K562 (cell line): ENCODE measurements at regions of chr2 and their contacts with region 1.

Region 1: DNA sequence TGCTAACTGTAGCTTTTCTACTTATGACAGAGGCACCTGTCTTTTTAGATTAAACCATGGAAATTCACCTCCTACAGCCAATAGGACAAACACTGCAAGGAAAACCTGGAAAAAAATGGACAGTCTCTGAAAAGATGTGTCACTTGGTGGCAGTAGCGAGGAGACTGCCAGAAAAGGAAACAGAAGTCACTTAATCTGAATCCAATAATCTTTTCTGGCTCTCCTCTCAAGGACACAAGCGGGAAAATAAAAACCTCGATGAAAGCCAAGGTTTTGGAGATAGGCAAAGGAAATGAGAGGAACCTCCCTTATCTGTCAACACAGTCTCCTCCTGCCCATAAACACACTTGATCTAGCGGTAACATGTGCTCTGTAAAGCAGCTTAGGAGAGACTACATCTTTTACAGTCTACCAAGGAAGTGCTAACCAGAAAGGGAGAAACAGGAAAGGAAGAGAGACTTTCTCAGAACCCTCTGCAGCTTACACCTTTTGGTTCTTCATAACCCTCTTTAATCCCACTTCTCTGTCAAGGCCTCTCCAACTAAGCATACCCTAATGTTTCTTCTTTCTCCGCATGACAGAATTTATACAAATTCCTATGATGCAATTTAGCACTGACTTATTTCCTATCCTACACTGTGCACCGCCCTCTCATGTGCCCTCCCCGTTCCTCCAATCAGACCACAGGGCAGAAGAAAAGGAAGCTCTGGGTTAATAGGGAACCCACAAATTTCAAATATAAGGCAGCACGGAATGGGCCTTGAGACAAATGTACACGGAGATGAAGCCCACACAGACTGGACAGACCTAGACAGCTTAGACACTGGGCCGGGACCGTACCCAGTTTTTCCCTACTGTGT is 52.8 kb downstream of the CLASP1 start:
- DNase-seq: peak; percentile 76 to 93 (median 80)
- ATAC-seq: peak; percentile 93
- H3K4me3 ChIP-seq: peak overlapping the region; percentile 35
- H3K27ac ChIP-seq: peak overlapping the region; percentile 93
- H3K4me1 ChIP-seq: peaks cover 0 to 35% of the 10 kb centered on the region in 2 experiments; a peak in 4 of 5 replicates
- H3K27me3 ChIP-seq: no peaks in the 10 kb centered on the region
- CTCF ChIP-seq: peak; percentile 46 to 82 (median 74); a peak in 4 of 6 replicates
- EP300 ChIP-seq: peak; percentile 96
- POLR2A ChIP-seq: peak; percentile 63; the same call in 1 of the 2 replicates
- RAD21 ChIP-seq: peak; percentile 62 to 74

Region 2: DNA sequence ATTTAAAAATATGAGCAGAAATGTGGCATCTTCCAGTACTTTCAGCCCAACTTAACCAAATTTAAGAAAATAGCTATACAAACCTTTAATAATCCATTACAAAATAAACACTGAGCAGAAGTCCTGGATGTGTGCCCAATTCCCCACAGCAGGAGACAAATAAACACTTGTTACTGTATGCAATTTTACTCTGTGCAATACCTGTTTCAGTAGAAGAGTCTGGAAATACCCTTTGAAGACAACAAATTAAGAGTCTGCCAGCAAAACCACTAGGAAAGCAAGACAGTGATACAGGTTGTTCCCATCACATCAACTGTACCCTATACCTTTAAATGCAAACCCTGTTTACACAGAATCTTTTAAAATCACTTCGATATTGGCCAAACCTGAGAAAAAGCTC is 107.2 kb before region 1 on chr2:
- CTCF ChIA-PET with region 1: no interaction called
- POLR2A ChIA-PET with region 1: no interaction called
- in situ Hi-C with region 1: no loop called
- intact Hi-C with region 1: no loop called
- DNase-seq: no peak
- ATAC-seq: peak; percentile 44; the same call in 1 of the 3 replicates
- H3K4me3 ChIP-seq: no peak overlapping the region
- H3K27ac ChIP-seq: no peak overlapping the region
- H3K4me1 ChIP-seq: peaks cover 0 to 7% of the 10 kb centered on the region in 2 experiments; a peak in 1 of 5 replicates
- H3K27me3 ChIP-seq: no peaks in the 10 kb centered on the region
- CTCF ChIP-seq: no peak
- EP300 ChIP-seq: no peak
- POLR2A ChIP-seq: no peak
- RAD21 ChIP-seq: no peak

Region 3: DNA sequence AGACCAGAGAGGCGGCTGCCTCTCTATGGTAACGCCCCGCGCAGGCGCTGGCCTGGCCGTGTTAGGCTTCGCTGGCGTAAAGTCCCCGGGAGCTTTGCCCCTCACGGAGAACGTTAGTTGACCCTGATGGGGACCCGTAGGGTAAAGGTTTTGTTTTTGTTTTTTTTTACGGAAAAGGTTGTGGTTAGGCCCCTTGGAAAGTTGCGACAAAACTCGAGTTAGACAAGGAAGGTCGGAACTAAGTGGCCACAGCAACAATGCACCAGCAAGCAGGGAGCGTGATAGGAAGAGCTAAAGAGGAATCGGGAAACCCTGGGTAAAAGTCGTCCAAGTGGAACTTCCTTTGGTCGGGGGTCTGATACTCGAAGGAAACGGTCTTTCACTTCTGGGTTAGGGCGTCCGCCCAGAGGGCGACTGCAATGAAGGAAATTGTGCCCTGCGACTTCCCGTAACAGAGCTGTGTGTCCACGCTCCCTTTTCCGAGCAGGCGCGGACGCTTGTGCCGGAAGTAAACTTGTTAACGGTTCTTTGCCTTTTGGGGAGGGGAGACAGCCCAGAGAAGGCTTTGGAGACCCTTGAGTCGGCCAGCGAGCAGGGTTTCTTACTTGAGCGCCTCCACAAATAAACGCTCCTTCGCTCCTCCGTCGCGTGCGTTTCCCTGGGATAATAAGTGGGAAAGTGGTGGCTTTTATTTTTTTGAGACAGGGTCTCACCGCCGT is 53.3 kb after region 1 on chr2:
- CTCF ChIA-PET with region 1: no interaction called
- POLR2A ChIA-PET with region 1: interaction called, 7 read pairs
- in situ Hi-C with region 1: loop called (anchors 5 kb)
- intact Hi-C with region 1: loop called (anchors 1 kb)
- DNase-seq: peak; percentile 95 to 98 (median 96)
- ATAC-seq: peak; percentile 93
- H3K4me3 ChIP-seq: peak overlapping the region; percentile 88
- H3K27ac ChIP-seq: peak overlapping the region; percentile 100
- H3K4me1 ChIP-seq: peaks cover 12 to 23% of the 10 kb centered on the region in 2 experiments
- H3K27me3 ChIP-seq: no peaks in the 10 kb centered on the region
- CTCF ChIP-seq: no peak
- EP300 ChIP-seq: peak; percentile 57
- POLR2A ChIP-seq: peak; percentile 95
- RAD21 ChIP-seq: no peak

Region 4: DNA sequence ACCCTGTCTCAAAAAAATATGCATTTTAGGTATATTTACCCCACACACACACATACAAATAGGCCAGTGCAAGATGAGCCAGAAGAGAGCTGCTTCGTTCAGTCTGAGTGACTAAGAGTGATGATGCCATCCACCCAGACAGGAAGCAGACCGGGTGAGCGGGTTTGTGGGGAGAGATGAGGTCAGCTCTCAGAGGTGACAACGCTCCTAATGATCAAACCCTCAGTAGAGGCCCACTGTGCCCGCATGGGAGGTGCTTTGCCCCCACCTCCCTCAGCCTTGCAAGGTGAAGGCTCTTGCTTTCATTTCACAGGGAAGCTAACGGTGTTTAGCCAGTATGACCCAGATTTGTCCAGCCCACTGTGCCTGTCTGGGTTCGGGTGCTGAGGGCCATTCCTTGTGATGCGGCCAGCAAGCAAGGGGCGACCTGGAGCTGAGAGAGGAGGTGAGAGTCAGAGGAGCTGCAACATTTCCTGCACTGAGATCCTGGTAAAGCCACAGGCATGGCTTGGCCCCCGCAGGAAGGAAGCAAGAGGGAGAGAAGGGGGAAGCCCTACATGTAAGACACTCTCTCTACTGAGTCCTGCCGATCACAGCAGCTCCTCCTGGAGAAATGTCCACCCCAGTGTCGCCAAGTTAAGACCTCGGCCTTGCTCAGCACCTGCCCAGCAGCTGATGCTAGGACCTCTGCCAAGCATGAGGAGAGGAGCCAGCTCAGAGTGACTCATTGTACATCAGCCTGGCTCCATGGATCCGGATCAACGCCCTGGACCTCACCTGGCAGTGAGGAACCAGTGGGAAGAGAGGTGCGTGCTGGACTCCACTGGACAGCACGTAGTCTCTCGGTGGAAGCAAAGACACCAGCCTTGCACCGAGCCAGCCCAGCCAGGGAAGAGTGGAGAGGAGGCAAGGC is 103.2 kb after region 1 on chr2:
- CTCF ChIA-PET with region 1: no interaction called
- POLR2A ChIA-PET with region 1: no interaction called
- in situ Hi-C with region 1: no loop called
- intact Hi-C with region 1: loop called (anchors 5 kb)
- DNase-seq: peak; percentile 28 to 49 (median 40)
- ATAC-seq: peak; percentile 75
- H3K4me3 ChIP-seq: no peak overlapping the region
- H3K27ac ChIP-seq: no peak overlapping the region
- H3K4me1 ChIP-seq: peaks cover 17 to 32% of the 10 kb centered on the region in 2 experiments
- H3K27me3 ChIP-seq: no peaks in the 10 kb centered on the region
- CTCF ChIP-seq: no peak
- EP300 ChIP-seq: no peak
- POLR2A ChIP-seq: no peak
- RAD21 ChIP-seq: no peak

Region 5: DNA sequence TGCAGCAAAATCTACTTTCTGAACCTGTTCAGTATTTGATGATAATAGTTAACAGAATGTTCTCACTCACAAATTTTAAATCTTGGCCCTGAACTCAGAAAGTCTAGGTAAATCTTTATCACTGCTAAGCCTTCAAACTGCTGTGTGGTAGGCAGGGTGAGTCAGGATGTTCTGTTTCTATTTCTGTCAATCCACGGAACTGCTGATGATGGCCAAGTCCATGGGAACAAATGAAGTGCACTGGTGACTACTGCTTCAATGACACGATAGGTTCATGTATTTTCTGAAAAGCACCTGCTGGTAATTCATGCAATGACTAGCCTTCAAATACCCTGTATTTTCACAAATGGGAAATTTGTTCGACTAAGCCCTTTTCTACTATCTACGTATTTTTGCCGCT is 126.0 kb after region 1 on chr2:
- CTCF ChIA-PET with region 1: interaction called, 3 read pairs
- POLR2A ChIA-PET with region 1: no interaction called
- in situ Hi-C with region 1: no loop called
- intact Hi-C with region 1: loop called (anchors 5 kb)
- DNase-seq: peak in 2 of 4 experiments; percentile 62 to 63
- ATAC-seq: peak; percentile 74
- H3K4me3 ChIP-seq: no peak overlapping the region
- H3K27ac ChIP-seq: no peak overlapping the region
- H3K4me1 ChIP-seq: peaks cover 6 to 16% of the 10 kb centered on the region in 2 experiments; a peak in 4 of 5 replicates
- H3K27me3 ChIP-seq: no peaks in the 10 kb centered on the region
- CTCF ChIP-seq: no peak
- EP300 ChIP-seq: no peak
- POLR2A ChIP-seq: no peak
- RAD21 ChIP-seq: 0 out of 4 replicates have a peak, but pooled peaks of 1 of the 2 experiments have one; percentile 21

Region 6: DNA sequence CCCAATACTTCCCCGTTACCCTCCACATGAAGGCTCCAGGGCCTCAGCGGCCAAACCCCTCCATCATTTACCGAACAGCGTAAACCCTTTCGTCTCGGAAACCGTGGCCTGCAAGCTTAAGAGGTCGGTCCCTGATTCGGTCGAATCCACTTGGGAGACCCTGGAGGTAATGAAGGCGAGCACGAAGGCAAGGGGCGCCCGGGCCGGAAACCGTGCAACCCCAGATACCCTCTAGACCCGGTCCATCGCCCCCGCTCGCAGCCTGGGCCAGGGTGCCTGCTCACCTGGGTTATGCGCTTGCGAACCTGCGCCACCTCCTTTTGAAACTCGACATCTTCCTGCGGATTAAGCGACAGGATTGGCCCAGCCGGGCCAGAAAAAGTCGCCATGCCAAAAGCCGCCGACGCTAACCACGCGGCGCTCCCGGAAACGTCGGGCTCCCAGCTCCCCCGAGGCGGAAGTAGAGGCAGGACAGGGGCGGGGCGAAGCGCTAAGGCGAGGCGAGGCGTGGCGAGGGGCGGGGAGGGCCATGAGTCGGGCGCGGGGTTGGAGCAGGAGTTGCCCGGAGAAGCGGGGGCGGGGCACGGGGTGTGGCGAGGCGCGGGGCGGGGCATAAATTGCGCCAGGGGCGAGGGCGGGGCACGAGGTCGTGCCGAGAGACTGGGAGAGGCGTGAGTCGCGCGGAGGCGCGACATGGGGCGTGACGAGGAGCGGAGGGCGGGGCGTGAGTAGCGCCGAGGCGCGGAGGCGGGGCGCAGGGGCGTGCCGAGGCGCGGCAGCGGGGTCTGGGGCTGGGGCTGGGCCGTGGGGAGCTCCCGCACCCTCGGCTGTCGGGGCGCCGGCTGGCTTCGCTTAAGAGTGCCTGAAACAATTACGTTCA is 140.3 kb after region 1 on chr2 and contains the start of gene NIFK:
- CTCF ChIA-PET with region 1: no interaction called
- POLR2A ChIA-PET with region 1: interaction called, 3 read pairs
- in situ Hi-C with region 1: no loop called
- intact Hi-C with region 1: loop called (anchors 1 kb)
- DNase-seq: peak; percentile 97 to 98 (median 98)
- ATAC-seq: peak; percentile 97
- H3K4me3 ChIP-seq: peak within 1 kb of the TSS; percentile 92
- H3K27ac ChIP-seq: peak within 1 kb of the TSS; percentile 81
- H3K4me1 ChIP-seq: peaks cover 6 to 20% of the 10 kb centered on the region in 2 experiments; a peak in 4 of 5 replicates
- H3K27me3 ChIP-seq: no peaks in the 10 kb centered on the region
- CTCF ChIP-seq: 0 out of 6 replicates have a peak, but pooled peaks of 1 of the 3 experiments have one; percentile 15
- EP300 ChIP-seq: no peak
- POLR2A ChIP-seq: peak; percentile 89
- RAD21 ChIP-seq: no peak
- polyA plus RNA-seq, gene NIFK: 191 to 223 TPM

Region 7: GRCh38 chr2:121888200-121888579 is 291.7 kb after region 1 on chr2:
- CTCF ChIA-PET with region 1: no interaction called
- POLR2A ChIA-PET with region 1: no interaction called
- in situ Hi-C with region 1: no loop called
- intact Hi-C with region 1: no loop called
- DNase-seq: peak; percentile 37 to 58 (median 48)
- ATAC-seq: peak; percentile 90
- H3K4me3 ChIP-seq: no peak overlapping the region
- H3K27ac ChIP-seq: no peak overlapping the region
- H3K4me1 ChIP-seq: peaks cover 6 to 9% of the 10 kb centered on the region in 2 experiments; a peak in 4 of 5 replicates
- H3K27me3 ChIP-seq: peaks cover 6 to 31% of the 10 kb centered on the region in 2 experiments; a peak in 4 of 5 replicates
- CTCF ChIP-seq: peak; percentile 34 to 60 (median 39)
- EP300 ChIP-seq: no peak
- POLR2A ChIP-seq: no peak
- RAD21 ChIP-seq: no peak